PC-9 (cell line): ENCODE measurements at regions of chr9 and their contacts with region 1.

Region 1: DNA sequence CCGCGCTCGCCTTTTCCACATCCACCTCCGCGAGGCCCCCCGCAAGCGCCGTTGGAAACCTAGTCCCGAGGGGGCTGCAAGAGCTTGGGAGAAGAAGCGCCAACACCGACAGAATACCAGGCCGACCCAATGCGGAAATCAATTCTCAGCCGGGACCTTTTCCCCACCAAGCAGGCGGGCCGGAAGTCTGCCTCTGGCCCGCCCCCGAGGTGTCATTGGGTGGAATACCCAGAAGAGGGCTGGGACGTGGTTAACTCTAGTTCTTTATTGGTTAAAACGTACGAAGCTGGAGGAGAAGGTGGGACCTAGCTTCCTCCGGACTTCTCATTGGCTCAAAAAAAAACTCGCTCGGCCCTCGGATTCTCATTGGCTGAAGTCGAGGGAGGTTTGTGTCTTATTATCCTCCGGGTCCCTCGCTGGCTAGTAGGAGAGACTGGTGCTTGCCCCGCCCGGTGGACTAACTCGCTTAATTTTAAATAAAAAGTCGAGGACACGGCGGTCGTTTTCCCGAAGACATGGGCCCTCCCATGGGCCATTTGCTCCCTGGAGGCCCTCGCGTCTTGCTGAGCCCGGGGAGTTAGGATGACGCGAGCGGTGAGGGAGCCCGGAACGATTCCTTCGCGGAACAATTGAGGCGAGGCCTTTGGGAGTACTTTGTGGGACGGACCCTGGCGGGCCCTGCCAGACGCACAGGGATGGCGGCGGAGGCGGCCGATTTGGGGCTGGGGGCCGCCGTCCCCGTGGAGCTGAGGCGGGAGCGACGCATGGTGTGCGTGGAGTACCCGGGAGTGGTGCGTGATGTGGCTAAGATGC is at the start of gene GTF3C5:
- DNase-seq: peak; percentile 94 to 98
- H3K4me3 ChIP-seq: peak within 1 kb of the TSS; percentile 76
- H3K27ac ChIP-seq: peak within 1 kb of the TSS; percentile 57
- H3K4me1 ChIP-seq: peaks cover 25% of the 10 kb centered on the region
- H3K27me3 ChIP-seq: no peaks in the 10 kb centered on the region
- CTCF ChIP-seq: no peak
- total RNA-seq, gene GTF3C5: 79.6 and 107 TPM in 2 replicates

Region 2: DNA sequence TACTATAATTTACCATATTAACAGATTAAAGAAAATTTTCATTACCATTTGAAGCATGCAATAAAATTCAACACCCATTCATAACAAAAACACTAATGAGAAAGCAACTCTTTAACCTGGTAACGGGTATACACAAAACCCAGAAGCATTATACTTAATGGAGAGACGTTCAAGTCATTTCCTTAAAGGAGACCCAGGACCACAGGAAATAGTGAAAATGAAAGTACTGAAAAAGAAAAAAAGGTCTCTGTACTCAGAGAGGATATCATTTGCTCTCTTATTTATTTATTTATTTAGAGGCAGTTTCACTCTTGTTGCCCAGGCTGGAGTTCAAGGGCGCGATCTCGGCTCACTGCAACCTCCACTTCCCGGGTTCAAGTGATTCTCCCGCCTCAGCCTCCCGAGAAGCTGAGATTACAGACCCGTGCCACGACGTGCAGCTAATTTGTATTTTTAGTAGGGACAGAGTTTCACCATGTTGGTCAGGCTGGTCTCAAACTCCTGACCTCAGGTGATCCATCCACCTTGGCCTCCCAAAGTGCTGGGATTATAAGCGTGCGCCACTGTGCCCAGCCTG is 737.3 kb before region 1 on chr9:
- CTCF ChIA-PET with region 1: no interaction called
- POLR2A ChIA-PET with region 1: no interaction called
- intact Hi-C with region 1: no loop called
- DNase-seq: no peak
- H3K4me3 ChIP-seq: no peak overlapping the region
- H3K27ac ChIP-seq: no peak overlapping the region
- H3K4me1 ChIP-seq: no peaks in the 10 kb centered on the region
- H3K27me3 ChIP-seq: no peaks in the 10 kb centered on the region
- CTCF ChIP-seq: no peak

Region 3: GRCh38 chr9:132669698-132670456 is 360.6 kb before region 1 on chr9 and contains the start of gene DDX31:
- CTCF ChIA-PET with region 1: no interaction called
- POLR2A ChIA-PET with region 1: interaction called, 10 read pairs
- intact Hi-C with region 1: no loop called
- DNase-seq: peak; percentile 63 to 86
- H3K4me3 ChIP-seq: peak within 1 kb of the TSS; percentile 85
- H3K27ac ChIP-seq: peak within 1 kb of the TSS; percentile 90
- H3K4me1 ChIP-seq: peaks cover 25% of the 10 kb centered on the region
- H3K27me3 ChIP-seq: no peaks in the 10 kb centered on the region
- CTCF ChIP-seq: no peak; the same call in 1 of the 2 replicates
- total RNA-seq, gene DDX31: 19.2 and 21.5 TPM in 2 replicates

Region 4: GRCh38 chr9:132901856-132902831 is 128.4 kb before region 1 on chr9:
- CTCF ChIA-PET with region 1: no interaction called
- POLR2A ChIA-PET with region 1: no interaction called
- intact Hi-C with region 1: no loop called
- DNase-seq: peak; percentile 69 to 78
- H3K4me3 ChIP-seq: no peak overlapping the region
- H3K27ac ChIP-seq: no peak overlapping the region
- H3K4me1 ChIP-seq: no peaks in the 10 kb centered on the region
- H3K27me3 ChIP-seq: no peaks in the 10 kb centered on the region
- CTCF ChIP-seq: peak; percentile 94

Region 5: DNA sequence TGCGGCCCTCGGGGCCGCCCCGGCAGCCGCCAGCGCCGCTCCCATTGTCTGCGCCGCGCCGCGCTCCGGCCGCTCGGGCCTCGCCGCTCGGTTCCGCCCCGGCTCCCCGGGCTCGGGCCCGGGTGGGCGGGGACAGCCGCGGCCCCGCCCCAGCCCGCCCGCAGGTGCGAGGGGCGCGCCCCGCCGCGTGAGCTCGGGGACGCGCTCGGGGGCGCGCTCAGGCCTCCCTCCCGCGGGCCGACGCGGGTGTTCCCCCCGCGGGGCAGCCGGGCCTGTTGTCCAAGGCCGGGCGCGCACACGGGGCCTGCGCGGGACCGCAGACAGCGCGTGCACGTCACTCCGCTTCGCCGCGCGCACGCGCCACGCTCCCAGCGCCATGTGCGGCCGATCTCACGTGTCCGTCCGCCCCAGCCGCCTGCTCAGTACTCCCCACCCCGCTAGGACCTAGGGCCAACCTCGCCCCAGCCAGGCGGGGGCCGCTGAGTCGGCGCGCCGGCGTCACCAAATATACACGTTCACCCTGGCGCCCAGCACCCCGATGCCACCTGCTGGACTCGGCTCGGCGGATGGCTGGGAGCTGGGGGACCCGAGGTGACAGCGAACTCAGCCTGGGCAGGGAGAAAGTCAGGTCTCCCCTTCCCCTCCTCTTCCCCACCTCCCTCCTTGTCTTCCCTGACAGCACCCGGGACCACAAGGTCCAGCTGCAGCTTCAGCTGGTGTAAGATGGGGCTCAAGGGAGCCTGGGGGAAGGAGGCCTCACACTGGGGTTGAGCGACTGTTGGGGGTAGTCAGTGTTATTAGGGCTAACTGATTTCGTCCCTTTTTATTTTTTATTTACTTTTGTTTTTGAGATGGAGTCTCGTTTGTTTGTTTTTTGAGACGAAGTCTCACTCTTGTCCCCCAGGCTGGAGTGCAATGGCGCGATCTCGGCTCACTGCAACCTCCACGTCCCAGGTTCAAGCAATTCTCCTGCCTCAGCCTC is 118.9 kb after region 1 on chr9:
- CTCF ChIA-PET with region 1: interaction called, 3 read pairs
- POLR2A ChIA-PET with region 1: interaction called, 42 read pairs
- intact Hi-C with region 1: loop called (anchors 1 kb)
- DNase-seq: peak; percentile 84 to 96
- H3K4me3 ChIP-seq: peak overlapping the region; percentile 61
- H3K27ac ChIP-seq: peak overlapping the region; percentile 57
- H3K4me1 ChIP-seq: peaks cover 21% of the 10 kb centered on the region
- H3K27me3 ChIP-seq: no peaks in the 10 kb centered on the region
- CTCF ChIP-seq: no peak; the same call in 1 of the 2 replicates

Region 6: DNA sequence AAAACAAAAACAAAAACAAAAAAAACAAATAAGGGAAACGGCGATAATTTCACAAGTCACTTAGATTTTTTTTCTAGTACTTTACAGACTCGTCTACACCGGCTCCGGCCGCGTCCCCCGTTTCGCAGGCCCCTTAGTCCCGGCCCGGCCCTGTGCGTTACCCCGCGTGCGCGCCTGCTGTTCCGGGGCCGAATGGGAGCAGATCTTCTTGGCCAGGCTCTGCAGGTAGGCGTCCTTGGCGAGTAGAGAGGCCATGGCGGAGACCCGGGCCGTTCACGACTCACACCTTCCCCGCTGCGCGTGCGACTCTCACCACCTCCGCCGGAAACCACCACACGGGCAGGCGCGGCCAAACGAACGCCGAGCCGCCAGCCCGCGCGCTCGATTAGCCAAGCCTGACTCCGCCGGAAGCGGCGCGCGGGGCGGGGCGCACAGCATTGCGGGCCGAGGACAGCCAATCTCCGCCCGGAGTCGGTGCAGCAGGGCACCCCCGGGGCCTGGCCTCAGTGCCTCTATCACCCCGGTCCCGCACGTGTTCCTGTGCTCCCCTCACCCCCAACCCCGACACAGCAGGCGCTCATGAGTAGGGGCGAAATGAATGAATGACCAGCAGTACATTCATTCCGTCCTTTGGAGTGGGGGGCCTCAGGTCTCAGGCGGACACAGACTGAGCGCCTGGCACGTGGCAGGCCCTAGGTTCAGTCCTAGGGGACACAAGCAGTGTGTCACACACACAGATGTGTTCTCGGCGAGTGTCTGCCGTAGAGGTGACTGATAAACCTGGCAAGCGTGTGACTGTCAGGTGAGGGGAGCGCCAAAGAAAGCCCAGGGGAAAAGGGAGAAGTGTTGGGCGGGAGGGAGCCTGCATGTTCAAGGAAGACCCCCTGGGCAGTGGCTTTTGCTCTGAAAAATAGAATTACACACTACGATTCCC is 305.6 kb after region 1 on chr9 and contains the start of gene SURF6:
- CTCF ChIA-PET with region 1: no interaction called
- POLR2A ChIA-PET with region 1: interaction called, 3 read pairs
- intact Hi-C with region 1: loop called (anchors 5 kb)
- DNase-seq: peak; percentile 76 to 92
- H3K4me3 ChIP-seq: peak within 1 kb of the TSS; percentile 94
- H3K27ac ChIP-seq: peak within 1 kb of the TSS; percentile 48
- H3K4me1 ChIP-seq: peaks cover 15% of the 10 kb centered on the region
- H3K27me3 ChIP-seq: no peaks in the 10 kb centered on the region
- CTCF ChIP-seq: no peak
- total RNA-seq, gene SURF6: 21.2 and 29.8 TPM in 2 replicates

Region 7: GRCh38 chr9:133406480-133407307 is 376.2 kb after region 1 on chr9:
- CTCF ChIA-PET with region 1: no interaction called
- POLR2A ChIA-PET with region 1: no interaction called
- intact Hi-C with region 1: loop called (anchors 2 kb)
- DNase-seq: peak; percentile 37 to 74
- H3K4me3 ChIP-seq: no peak overlapping the region
- H3K27ac ChIP-seq: no peak overlapping the region
- H3K4me1 ChIP-seq: no peaks in the 10 kb centered on the region
- H3K27me3 ChIP-seq: no peaks in the 10 kb centered on the region
- CTCF ChIP-seq: peak; percentile 89

Region 8: DNA sequence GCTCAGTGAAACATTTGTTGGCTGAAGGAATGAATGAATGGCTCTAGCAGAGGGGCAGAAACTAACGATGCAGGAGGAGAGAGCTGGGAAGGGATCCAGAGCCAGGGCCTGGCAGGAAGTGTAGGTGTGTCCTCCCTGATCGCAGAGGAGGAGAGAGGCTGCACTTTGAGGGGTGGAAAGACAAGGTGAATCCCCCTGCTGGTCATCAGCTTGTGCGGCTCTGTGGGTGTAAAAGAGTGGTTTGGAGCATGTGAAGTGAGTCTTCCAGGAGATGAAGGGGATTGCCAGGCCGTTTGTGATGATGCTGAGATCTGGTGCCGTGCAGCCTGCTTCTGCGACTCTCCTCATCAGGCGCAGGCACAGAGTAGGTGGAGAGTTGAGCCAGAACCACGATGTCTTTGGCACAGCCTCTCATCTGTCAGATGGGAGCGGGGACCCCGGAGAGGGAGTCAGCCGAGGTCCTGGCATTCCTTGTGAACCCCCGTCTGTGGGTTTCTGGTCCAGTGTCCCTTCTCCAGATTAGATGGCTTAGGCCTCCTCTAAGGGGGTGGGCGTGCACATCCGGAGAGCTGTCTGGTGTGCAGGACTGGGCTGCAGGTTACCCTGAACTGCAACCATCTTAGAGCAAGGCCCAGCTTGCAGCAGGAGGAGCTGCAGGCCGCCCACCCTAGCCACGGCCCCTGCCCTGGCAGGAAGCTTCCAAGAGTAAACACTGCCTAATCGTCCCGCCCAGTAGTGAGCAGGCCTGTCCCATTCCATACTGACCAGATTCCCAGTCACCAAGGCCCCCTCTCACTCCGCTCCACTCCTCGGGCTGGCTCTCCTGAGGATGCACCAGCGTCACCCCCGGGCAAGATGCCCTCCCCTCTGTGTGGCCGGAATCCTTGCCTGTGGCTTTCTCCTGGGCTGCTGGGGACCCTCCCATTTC is 391.4 kb after region 1 on chr9 and contains the start of gene ADAMTS13:
- CTCF ChIA-PET with region 1: no interaction called
- POLR2A ChIA-PET with region 1: no interaction called
- intact Hi-C with region 1: no loop called
- DNase-seq: no peak
- H3K4me3 ChIP-seq: no peak within 1 kb of the TSS
- H3K27ac ChIP-seq: no peak within 1 kb of the TSS
- H3K4me1 ChIP-seq: no peaks in the 10 kb centered on the region
- H3K27me3 ChIP-seq: peaks cover 13% of the 10 kb centered on the region
- CTCF ChIP-seq: no peak
- total RNA-seq, gene ADAMTS13: 7.1 and 11.1 TPM in 2 replicates